ENCODE measurements at regions of chr14 and their contacts with region 1.

Region 1: DNA sequence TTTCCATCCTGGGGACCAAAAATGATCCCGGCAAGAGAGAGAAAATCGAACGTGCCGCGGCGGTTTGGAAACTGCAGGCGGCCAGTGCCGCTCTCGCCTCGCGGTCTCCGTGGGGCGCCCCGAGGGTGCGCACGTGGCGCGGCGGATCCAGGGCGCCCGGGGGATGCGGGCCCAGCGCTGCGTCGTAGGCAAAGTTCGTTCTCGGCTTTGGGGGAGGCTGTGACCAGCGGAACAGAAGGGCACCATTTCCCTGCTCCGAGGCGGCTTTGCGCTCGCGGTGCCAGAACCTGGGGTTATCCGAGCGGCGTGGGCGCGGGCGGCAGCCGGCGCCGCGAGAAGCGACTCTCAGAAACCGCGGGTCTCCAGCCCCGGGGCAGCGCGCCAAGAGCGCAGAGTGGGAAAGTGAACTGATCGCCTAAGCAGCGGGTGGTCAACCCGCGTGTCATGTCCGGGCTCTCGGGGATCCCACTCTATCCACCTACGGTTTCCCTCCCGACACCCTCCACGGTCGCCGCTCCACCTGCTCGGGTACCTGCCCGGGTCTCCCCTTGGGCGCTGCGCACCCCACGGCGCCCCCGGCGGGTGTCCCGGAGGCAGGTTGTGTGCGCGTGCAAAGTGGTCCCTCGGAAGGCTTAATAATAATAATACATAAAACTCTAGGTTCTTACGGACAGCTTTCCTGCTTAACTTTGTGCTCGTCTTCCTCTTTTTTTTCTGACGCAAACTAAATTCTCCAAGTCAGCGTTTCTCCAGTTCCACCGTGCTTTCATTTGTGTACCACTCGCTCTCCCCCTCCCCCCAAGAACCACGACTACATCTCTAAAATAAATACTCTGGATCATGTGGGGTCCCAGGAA is 1.2 kb downstream of the ESRRB start:
- DNase-seq: no peak
- ATAC-seq: no peak
- H3K4me3 Mint-ChIP-seq: no peak overlapping the region
- H3K27ac Mint-ChIP-seq: no peak overlapping the region
- H3K4me1 Mint-ChIP-seq: peaks cover 5% of the 10 kb centered on the region
- H3K27me3 Mint-ChIP-seq: peaks cover 57% of the 10 kb centered on the region
- CTCF ChIP-seq: no peak

Region 2: GRCh38 chr14:76386915-76387782 is 10.0 kb after region 1 on chr14:
- CTCF ChIA-PET with region 1: interaction called, 14 read pairs
- POLR2A ChIA-PET with region 1: no interaction called
- intact Hi-C with region 1: no loop called
- DNase-seq: peak; percentile 77
- ATAC-seq: peak; percentile 99
- H3K4me3 Mint-ChIP-seq: no peak overlapping the region
- H3K27ac Mint-ChIP-seq: no peak overlapping the region
- H3K4me1 Mint-ChIP-seq: no peaks in the 10 kb centered on the region
- H3K27me3 Mint-ChIP-seq: peaks cover 33% of the 10 kb centered on the region
- CTCF ChIP-seq: peak; percentile 92